Activated CD4-positive, alpha-beta T cell treated with anti-CD3 and anti-CD28 coated beads for 36 hours (primary cell): ENCODE measurements at regions of chr13 and their contacts with region 1.

Region 1: DNA sequence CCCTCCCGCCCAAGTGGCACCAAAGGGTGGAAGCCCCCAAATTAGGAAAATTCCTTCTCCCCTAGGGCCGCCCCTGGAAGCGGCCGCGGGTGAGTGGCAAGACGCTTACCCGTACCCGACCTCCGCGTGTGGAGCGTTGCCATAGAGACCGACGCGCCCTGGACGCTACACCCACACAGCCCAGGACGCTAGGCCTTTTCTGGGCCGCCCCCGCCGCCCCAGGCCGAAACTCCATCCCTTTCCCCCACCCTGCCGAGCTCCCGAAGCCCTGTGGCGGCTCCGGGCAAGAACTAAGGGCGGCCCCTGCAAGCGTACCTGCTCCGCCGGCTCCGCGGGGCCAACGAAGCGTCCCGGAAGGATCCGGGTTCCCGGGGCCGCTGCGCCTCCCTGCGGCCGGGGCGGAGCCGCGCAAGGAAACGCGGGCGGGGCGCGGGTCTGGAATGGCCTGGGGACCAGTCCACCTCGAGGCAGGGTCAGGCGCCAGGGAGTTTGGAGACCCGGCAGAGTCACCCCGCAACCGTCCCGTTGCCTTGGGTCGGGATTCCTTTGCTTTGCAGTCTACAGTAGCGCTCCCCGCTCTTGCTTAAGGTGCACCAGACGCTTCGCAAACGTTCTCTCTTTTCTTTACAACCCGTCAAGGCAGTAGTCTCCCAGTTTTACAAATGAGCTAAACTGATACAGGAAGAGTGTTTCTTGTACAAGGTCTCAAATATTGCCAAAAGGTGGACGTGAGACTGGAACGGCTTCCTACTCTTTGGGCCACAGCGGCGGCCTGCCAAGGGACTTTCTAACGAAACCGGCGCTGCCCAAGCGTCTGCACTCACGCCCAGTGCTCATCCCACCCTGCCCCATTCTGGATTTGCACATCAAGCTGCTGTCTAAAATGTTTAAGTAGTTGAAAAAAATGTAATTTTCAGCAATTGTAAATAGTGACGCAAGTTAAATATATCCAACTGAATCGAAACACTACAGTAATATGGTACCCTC is at the start of gene NEK5:
- DNase-seq: peak; percentile 76
- ATAC-seq: peak; percentile 82
- H3K4me3 Mint-ChIP-seq: peak within 1 kb of the TSS; percentile 77
- H3K27ac Mint-ChIP-seq: peak within 1 kb of the TSS; percentile 34
- H3K4me1 Mint-ChIP-seq: peaks cover 21% of the 10 kb centered on the region
- H3K27me3 Mint-ChIP-seq: peaks cover 6% of the 10 kb centered on the region
- total RNA-seq, gene NEK5: 0.16 to 0.44 TPM

Region 2: DNA sequence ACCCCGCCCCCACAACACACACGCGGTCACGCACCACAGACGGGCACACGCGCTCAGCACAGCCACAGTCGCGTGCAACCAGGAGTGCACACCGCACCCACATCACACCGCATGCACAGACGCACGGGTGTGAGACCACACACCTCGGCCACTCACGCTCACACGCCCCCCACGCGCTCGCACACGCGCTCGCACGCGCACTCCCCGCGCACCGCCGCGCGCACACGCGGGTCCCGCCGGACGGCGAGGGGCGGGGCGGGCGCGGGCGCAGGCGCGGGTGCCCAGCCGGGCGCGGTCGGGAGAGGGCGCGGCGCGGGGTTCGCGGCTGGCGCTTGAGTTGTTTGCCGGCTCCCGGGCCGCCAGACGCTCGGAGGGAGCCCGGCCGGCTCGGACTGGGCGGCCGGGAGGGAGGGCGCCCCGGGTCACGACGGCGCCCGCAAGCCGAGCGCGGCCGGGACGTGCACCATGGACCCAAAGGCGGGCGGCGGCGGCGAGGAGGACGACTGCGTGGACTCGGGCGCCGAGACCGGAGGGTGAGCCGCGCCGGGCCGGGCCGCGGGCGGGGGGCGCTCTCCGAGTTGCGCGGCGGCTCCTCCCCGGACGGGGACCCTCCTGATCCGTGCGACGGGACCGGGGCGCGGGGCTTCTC is 906.8 kb before region 1 on chr13 and contains the start of gene FAM124A:
- CTCF ChIA-PET with region 1: no interaction called
- POLR2A ChIA-PET with region 1: no interaction called
- intact Hi-C with region 1: loop called in 1 of 2 experiments (anchors 1 kb)
- DNase-seq: peak; percentile 72
- ATAC-seq: peak; percentile 93
- H3K4me3 Mint-ChIP-seq: peak within 1 kb of the TSS; percentile 71
- H3K27ac Mint-ChIP-seq: no peak within 1 kb of the TSS
- H3K4me1 Mint-ChIP-seq: no peaks in the 10 kb centered on the region
- H3K27me3 Mint-ChIP-seq: peaks cover 43% of the 10 kb centered on the region
- total RNA-seq, gene FAM124A: 0.16 to 0.25 TPM

Region 3: GRCh38 chr13:51520524-51520923 is 608.5 kb before region 1 on chr13:
- CTCF ChIA-PET with region 1: no interaction called
- POLR2A ChIA-PET with region 1: no interaction called
- intact Hi-C with region 1: no loop called
- DNase-seq: no peak
- ATAC-seq: no peak
- H3K4me3 Mint-ChIP-seq: no peak overlapping the region
- H3K27ac Mint-ChIP-seq: no peak overlapping the region
- H3K4me1 Mint-ChIP-seq: peaks cover 22% of the 10 kb centered on the region
- H3K27me3 Mint-ChIP-seq: no peaks in the 10 kb centered on the region

Region 4: DNA sequence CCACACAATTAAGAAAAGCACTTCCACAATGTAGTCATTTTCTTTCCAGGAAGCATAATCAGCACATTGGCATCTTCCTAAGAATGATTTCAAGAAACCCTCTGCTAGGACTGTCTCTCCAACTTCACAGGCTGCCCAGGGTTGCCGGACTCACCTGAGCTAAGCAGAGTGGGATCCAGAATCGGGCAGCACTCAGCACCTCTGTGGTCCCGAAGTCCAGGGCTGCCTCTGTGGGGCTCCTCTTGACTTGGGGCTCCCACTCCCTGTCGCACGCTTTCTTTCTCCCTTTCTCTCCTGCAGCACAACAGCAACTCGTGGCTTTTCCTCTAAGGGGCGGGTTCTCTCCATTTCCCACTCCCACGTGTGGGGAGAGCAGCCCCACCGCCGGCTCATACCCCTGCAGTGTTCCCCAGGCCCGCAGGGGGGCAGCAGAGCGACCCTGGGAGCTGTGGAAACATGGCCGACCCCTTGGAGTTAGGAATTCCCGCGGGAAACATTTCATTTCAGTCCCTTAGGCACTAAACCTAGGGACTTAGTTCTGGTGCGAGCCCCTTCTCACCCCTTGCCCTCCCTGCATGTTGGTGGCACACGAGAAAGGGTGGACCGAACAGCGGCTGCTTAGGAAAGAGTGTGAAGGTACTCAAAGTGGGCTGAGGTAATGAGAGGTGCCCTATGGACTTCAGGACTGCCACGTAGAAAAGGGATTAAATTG is 284.0 kb before region 1 on chr13 and contains the start of gene TMEM272:
- CTCF ChIA-PET with region 1: interaction called, 3 read pairs
- POLR2A ChIA-PET with region 1: no interaction called
- intact Hi-C with region 1: loop called in 1 of 2 experiments (anchors 1 kb)
- DNase-seq: peak; percentile 78
- ATAC-seq: peak; percentile 74
- H3K4me3 Mint-ChIP-seq: peak within 1 kb of the TSS; percentile 54
- H3K27ac Mint-ChIP-seq: peak within 1 kb of the TSS; percentile 20
- H3K4me1 Mint-ChIP-seq: peaks cover 14% of the 10 kb centered on the region
- H3K27me3 Mint-ChIP-seq: peaks cover 6% of the 10 kb centered on the region
- total RNA-seq, gene TMEM272: 0.18 to 0.33 TPM

Region 5: GRCh38 chr13:52001120-52001731 is 127.8 kb before region 1 on chr13:
- CTCF ChIA-PET with region 1: interaction called, 8 read pairs
- POLR2A ChIA-PET with region 1: no interaction called
- intact Hi-C with region 1: loop called (anchors 1 kb)
- DNase-seq: no peak
- ATAC-seq: peak; percentile 89
- H3K4me3 Mint-ChIP-seq: no peak overlapping the region
- H3K27ac Mint-ChIP-seq: no peak overlapping the region
- H3K4me1 Mint-ChIP-seq: peaks cover 3% of the 10 kb centered on the region
- H3K27me3 Mint-ChIP-seq: peaks cover 4% of the 10 kb centered on the region

Region 6: DNA sequence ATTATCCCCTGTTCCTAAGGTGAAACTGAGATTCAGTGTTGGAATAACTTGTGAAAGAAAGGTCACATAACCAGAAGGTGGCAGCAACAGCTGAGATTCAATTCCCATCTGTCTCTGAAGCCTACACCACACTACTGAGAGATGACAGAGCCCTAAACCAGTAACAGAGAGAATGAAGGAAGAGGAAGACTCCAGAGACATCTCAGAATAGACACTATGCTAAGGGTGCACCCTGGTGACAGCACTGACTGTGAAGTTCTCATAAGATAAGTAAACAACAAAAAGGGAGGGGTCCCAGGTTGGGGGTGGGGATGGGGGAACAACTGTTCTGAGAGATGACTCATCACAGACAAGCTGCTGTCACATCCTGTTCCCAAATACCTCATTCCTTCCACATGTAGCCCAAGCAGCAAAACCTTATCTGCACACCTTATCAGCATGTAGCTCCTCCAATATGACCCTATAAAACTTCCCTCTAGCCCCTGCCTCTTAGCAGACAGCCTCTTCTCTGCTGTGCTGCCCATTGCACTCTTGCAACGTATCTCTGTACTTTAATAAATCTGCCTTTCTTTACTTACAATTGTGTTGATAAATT is 58.0 kb before region 1 on chr13:
- CTCF ChIA-PET with region 1: interaction called, 3 read pairs
- POLR2A ChIA-PET with region 1: no interaction called
- intact Hi-C with region 1: loop called in 1 of 2 experiments (anchors 1 kb)
- DNase-seq: peak; percentile 64
- ATAC-seq: peak; percentile 90
- H3K4me3 Mint-ChIP-seq: no peak overlapping the region
- H3K27ac Mint-ChIP-seq: no peak overlapping the region
- H3K4me1 Mint-ChIP-seq: peaks cover 11% of the 10 kb centered on the region
- H3K27me3 Mint-ChIP-seq: peaks cover 17% of the 10 kb centered on the region

Region 7: GRCh38 chr13:52194184-52194868 is 65.3 kb after region 1 on chr13:
- CTCF ChIA-PET with region 1: interaction called, 5 read pairs
- POLR2A ChIA-PET with region 1: no interaction called
- intact Hi-C with region 1: loop called in 1 of 2 experiments (anchors 2 kb)
- DNase-seq: peak; percentile 92
- ATAC-seq: peak; percentile 83
- H3K4me3 Mint-ChIP-seq: peak overlapping the region; percentile 86
- H3K27ac Mint-ChIP-seq: peak overlapping the region; percentile 100
- H3K4me1 Mint-ChIP-seq: peaks cover 32% of the 10 kb centered on the region
- H3K27me3 Mint-ChIP-seq: no peaks in the 10 kb centered on the region